Ascending aorta (tissue), 2 donors: ENCODE measurements at regions of chr2 and their contacts with region 1.

Region 1: GRCh38 chr2:216535454-216535995 is 36.9 kb downstream of the RPL37A start:
- DNase-seq: peak in 1 of 2 donors; percentile 94
- H3K4me3 ChIP-seq: no peak overlapping the region
- H3K27ac ChIP-seq: peak overlapping the region; percentile 91 to 93
- H3K4me1 ChIP-seq: peaks cover 22 to 39% of the 10 kb centered on the region in 2 donors
- H3K27me3 ChIP-seq: no peaks in the 10 kb centered on the region
- CTCF ChIP-seq: no peak

Region 2: DNA sequence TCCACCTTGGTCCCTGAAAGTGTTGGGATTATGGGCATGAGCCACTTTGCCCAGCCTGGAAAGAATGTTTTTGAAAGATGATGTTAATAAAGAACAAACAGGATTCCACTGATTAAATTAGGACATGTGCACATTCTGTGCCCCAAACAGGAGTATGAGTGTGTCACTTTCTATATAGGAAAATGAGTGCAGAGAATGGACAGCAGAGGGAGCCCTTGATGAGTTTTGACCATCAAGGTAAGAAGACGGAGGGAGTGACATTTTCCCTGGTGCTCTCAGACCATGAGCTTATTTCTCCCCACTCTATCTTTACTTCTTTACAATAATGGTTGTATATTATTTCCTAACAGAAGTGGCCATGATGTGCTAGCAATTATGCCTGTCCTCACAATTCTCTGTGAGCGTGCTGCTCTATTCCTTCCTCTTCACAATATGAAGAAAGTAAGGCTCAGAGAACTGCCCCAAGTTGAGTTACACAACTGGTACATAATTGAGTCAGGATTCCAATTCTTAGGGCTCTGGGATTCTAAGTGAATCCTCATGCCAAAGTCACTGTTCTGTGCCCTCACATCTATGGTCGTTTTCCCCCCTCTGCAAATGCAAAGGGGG is 16.3 kb before region 1 on chr2:
- intact Hi-C with region 1: loop called (anchors 1 kb)
- DNase-seq: peak in 1 of 2 donors; percentile 90
- H3K4me3 ChIP-seq: no peak overlapping the region
- H3K27ac ChIP-seq: peak overlapping the region; percentile 40 to 52
- H3K4me1 ChIP-seq: peaks cover 0 to 10% of the 10 kb centered on the region in 2 donors
- H3K27me3 ChIP-seq: no peaks in the 10 kb centered on the region
- CTCF ChIP-seq: peak; percentile 71 to 83 (median 79)

Region 3: DNA sequence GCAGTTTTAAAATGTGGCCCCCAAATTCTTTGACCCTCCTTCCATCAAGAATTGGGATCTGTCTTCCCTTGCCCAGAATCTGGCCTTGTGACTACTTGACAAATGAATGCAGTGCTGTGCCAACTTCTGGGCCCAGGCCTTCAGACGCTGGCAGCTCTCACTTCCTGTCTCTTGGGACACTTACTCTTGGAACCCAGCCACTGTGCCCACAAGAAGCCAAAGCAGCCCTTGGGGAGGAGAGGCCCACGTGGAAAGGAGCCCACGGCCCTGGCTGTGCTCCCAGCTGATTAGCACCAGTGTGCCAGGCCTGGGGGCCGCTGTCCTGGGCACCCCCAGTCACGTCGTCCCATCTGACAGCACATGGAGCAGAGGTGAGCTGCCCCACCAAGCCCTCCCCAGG is 19.7 kb after region 1 on chr2:
- intact Hi-C with region 1: loop called (anchors 2 kb)
- DNase-seq: peak; percentile 72 to 93
- H3K4me3 ChIP-seq: peak overlapping the region in 1 of 2 donors; percentile 5
- H3K27ac ChIP-seq: peak overlapping the region; percentile 64 to 85
- H3K4me1 ChIP-seq: peaks cover 27 to 73% of the 10 kb centered on the region in 2 donors
- H3K27me3 ChIP-seq: no peaks in the 10 kb centered on the region
- CTCF ChIP-seq: no peak

Region 4: DNA sequence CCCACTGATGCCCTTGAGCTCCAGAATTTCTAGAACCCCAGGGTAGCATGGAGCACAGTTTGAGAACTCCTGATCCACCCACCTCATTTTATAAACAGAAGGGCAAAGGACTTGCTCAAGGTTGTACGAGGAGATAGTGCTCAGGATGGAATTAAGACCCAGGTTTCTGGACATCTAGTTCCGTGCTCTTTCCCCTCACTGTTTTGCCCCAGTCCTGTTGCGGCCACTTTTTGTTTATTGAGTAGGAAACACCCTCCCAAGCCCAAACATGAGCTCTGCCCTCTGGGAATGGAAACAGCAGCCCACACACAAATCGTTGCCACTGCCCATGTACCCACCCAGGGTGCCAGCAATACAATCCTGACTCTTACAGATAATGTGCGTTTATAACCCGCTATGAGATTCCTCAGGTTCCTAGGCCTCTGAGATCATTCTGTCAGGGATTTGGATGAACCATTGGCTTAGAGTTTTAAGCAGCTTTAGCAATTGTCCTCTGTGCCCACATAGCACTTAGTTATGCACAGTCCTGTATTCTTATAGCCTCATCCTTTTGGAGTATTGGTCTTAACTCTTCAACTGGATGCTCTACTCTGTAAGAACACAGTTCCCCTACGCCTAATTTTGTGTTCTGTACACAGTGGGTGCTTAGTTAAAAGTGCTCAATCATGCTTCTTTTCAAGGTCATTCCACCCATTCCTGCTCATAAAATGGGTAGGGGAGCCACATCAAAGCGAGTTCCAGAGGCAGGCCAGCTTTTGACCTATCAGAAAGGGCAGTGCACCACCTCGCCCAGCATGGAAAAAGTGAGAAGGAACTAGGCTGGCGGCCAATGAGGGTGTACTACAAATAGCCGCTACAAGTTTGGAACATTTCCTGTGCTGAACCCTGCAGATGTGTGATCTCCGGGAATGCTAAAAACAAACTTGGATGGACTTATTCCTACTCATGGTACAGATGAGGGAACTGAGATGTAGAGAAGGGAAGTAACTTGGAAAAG is 37.4 kb after region 1 on chr2:
- intact Hi-C with region 1: loop called (anchors 1 kb)
- DNase-seq: peak; percentile 71 to 98
- H3K4me3 ChIP-seq: no peak overlapping the region
- H3K27ac ChIP-seq: peak overlapping the region; percentile 91 to 94
- H3K4me1 ChIP-seq: peaks cover 4 to 27% of the 10 kb centered on the region in 2 donors
- H3K27me3 ChIP-seq: no peaks in the 10 kb centered on the region
- CTCF ChIP-seq: no peak

Region 5: DNA sequence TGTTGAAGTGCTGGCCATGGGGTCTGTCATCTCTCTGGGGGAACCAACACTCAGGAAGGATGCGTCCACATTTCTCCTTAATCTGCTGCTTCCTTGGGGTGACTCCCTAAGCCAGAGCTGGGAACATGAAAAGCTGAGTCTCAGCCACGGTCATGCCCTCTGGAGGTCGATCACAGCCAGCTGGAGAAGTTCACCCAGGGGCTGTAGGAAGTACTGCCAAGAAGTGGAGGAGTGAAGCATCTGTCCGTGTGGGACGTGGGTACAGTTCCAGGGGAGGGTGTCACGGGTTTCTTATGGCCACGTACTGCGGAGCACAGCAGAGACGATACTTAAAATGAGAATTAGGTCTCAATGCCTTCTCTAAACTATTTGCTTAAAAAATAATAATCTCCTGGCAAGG is 55.3 kb after region 1 on chr2:
- intact Hi-C with region 1: no loop called
- DNase-seq: no peak
- H3K4me3 ChIP-seq: no peak overlapping the region
- H3K27ac ChIP-seq: no peak overlapping the region
- H3K4me1 ChIP-seq: peaks cover 3% of the 10 kb centered on the region in 2 donors
- H3K27me3 ChIP-seq: no peaks in the 10 kb centered on the region
- CTCF ChIP-seq: peak in 1 of 3 experiments; percentile 4

Region 6: GRCh38 chr2:216632952-216633615 is 97.6 kb after region 1 on chr2 and contains the start of gene IGFBP2:
- intact Hi-C with region 1: loop called (anchors 2 kb)
- DNase-seq: peak in 1 of 2 donors; percentile 77
- H3K4me3 ChIP-seq: peak within 1 kb of the TSS; percentile 81 to 96
- H3K27ac ChIP-seq: peak within 1 kb of the TSS; percentile 80 to 88
- H3K4me1 ChIP-seq: peaks cover 0 to 13% of the 10 kb centered on the region in 2 donors
- H3K27me3 ChIP-seq: no peaks in the 10 kb centered on the region
- CTCF ChIP-seq: no peak
- total RNA-seq, gene IGFBP2: 1,691 TPM